Caco-2 (cell line): ENCODE measurements at regions of chr7 and their contacts with region 1.

Region 1: GRCh38 chr7:8418629-8419245 is 14.7 kb upstream of the NXPH1 start:
- DNase-seq: peak; percentile 58 to 70
- H3K4me3 ChIP-seq: no peak overlapping the region
- H3K4me3 Mint-ChIP-seq: no peak overlapping the region
- H3K27ac Mint-ChIP-seq: no peak overlapping the region
- H3K4me1 ChIP-seq: no peaks in the 10 kb centered on the region
- H3K4me1 Mint-ChIP-seq: no peaks in the 10 kb centered on the region
- H3K27me3 ChIP-seq: no peaks in the 10 kb centered on the region
- H3K27me3 Mint-ChIP-seq: peaks cover 3% of the 10 kb centered on the region
- CTCF ChIP-seq: peak; percentile 70 to 81

Region 2: GRCh38 chr7:8441106-8442001 is 22.6 kb after region 1 on chr7:
- CTCF ChIA-PET with region 1: no interaction called
- POLR2A ChIA-PET with region 1: no interaction called
- intact Hi-C with region 1: no loop called
- DNase-seq: no peak
- H3K4me3 ChIP-seq: no peak overlapping the region
- H3K4me3 Mint-ChIP-seq: no peak overlapping the region
- H3K27ac Mint-ChIP-seq: no peak overlapping the region
- H3K4me1 ChIP-seq: peaks cover 13% of the 10 kb centered on the region
- H3K4me1 Mint-ChIP-seq: no peaks in the 10 kb centered on the region
- H3K27me3 ChIP-seq: no peaks in the 10 kb centered on the region
- H3K27me3 Mint-ChIP-seq: no peaks in the 10 kb centered on the region
- CTCF ChIP-seq: no peak

Region 3: GRCh38 chr7:8455426-8455825 is 36.7 kb after region 1 on chr7:
- CTCF ChIA-PET with region 1: no interaction called
- POLR2A ChIA-PET with region 1: no interaction called
- intact Hi-C with region 1: no loop called
- DNase-seq: no peak
- H3K4me3 ChIP-seq: no peak overlapping the region
- H3K4me3 Mint-ChIP-seq: no peak overlapping the region
- H3K27ac Mint-ChIP-seq: no peak overlapping the region
- H3K4me1 ChIP-seq: no peaks in the 10 kb centered on the region
- H3K4me1 Mint-ChIP-seq: no peaks in the 10 kb centered on the region
- H3K27me3 ChIP-seq: no peaks in the 10 kb centered on the region
- H3K27me3 Mint-ChIP-seq: no peaks in the 10 kb centered on the region
- CTCF ChIP-seq: no peak

Region 4: GRCh38 chr7:8724080-8724718 is 305.5 kb after region 1 on chr7:
- CTCF ChIA-PET with region 1: no interaction called
- POLR2A ChIA-PET with region 1: no interaction called
- intact Hi-C with region 1: loop called (anchors 1 kb)
- DNase-seq: peak; percentile 72 to 76
- H3K4me3 ChIP-seq: no peak overlapping the region
- H3K4me3 Mint-ChIP-seq: no peak overlapping the region
- H3K27ac Mint-ChIP-seq: no peak overlapping the region
- H3K4me1 ChIP-seq: no peaks in the 10 kb centered on the region
- H3K4me1 Mint-ChIP-seq: peaks cover 8% of the 10 kb centered on the region
- H3K27me3 ChIP-seq: no peaks in the 10 kb centered on the region
- H3K27me3 Mint-ChIP-seq: no peaks in the 10 kb centered on the region
- CTCF ChIP-seq: peak; percentile 83 to 90

Region 5: GRCh38 chr7:8785077-8785476 is 366.3 kb after region 1 on chr7:
- CTCF ChIA-PET with region 1: interaction called, 3 read pairs
- POLR2A ChIA-PET with region 1: no interaction called
- intact Hi-C with region 1: loop called (anchors 1 kb)
- DNase-seq: peak in 1 of 2 experiments; percentile 3
- H3K4me3 ChIP-seq: no peak overlapping the region
- H3K4me3 Mint-ChIP-seq: no peak overlapping the region
- H3K27ac Mint-ChIP-seq: no peak overlapping the region
- H3K4me1 ChIP-seq: no peaks in the 10 kb centered on the region
- H3K4me1 Mint-ChIP-seq: no peaks in the 10 kb centered on the region
- H3K27me3 ChIP-seq: no peaks in the 10 kb centered on the region; the same call in 1 of the 2 replicates
- H3K27me3 Mint-ChIP-seq: peaks cover 9% of the 10 kb centered on the region
- CTCF ChIP-seq: peak in 1 of 2 experiments; percentile 20

Region 6: GRCh38 chr7:8823486-8823885 is 404.7 kb after region 1 on chr7:
- CTCF ChIA-PET with region 1: interaction called, 5 read pairs
- POLR2A ChIA-PET with region 1: no interaction called
- intact Hi-C with region 1: loop called (anchors 1 kb)
- DNase-seq: peak in 1 of 2 experiments; percentile 7
- H3K4me3 ChIP-seq: no peak overlapping the region
- H3K4me3 Mint-ChIP-seq: no peak overlapping the region
- H3K27ac Mint-ChIP-seq: no peak overlapping the region
- H3K4me1 ChIP-seq: no peaks in the 10 kb centered on the region
- H3K4me1 Mint-ChIP-seq: no peaks in the 10 kb centered on the region
- H3K27me3 ChIP-seq: no peaks in the 10 kb centered on the region
- H3K27me3 Mint-ChIP-seq: peaks cover 4% of the 10 kb centered on the region
- CTCF ChIP-seq: peak in 1 of 2 experiments; percentile 6

Region 7: DNA sequence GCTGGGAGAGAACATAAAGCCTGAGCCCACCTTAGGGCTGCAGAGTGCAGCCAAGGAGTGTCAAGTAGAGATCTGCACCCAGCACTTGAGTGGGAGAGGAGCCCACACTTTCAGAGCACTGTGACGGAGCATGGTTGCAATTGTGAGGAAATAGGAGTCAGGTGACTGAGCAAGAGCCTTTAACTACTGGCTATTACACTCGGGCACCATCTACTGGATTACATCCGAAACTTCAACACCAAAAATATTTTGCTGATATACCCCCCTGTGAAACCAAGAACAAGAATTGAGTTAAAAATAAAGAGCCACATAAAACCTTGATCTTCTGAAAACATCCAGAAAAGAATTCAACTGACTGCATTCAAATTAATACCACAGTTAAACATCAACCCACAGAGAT is 672.5 kb after region 1 on chr7:
- CTCF ChIA-PET with region 1: no interaction called
- POLR2A ChIA-PET with region 1: no interaction called
- intact Hi-C with region 1: loop called (anchors 1 kb)
- DNase-seq: no peak
- H3K4me3 ChIP-seq: no peak overlapping the region
- H3K4me3 Mint-ChIP-seq: no peak overlapping the region
- H3K27ac Mint-ChIP-seq: no peak overlapping the region
- H3K4me1 ChIP-seq: no peaks in the 10 kb centered on the region
- H3K4me1 Mint-ChIP-seq: no peaks in the 10 kb centered on the region
- H3K27me3 ChIP-seq: no peaks in the 10 kb centered on the region
- H3K27me3 Mint-ChIP-seq: no peaks in the 10 kb centered on the region
- CTCF ChIP-seq: peak in 1 of 2 experiments; percentile 2